Activated CD8-positive, alpha-beta T cell treated with anti-CD3 and anti-CD28 coated beads, Interleukin-2, amount 10 ng/mL, durations not matched to agents 7 days and 5 days (primary cell): ENCODE measurements at regions of chr2 and their contacts with region 1.

Region 1: GRCh38 chr2:25314514-25315315 is 27.0 kb downstream of the DNMT3A start:
- DNase-seq: peak; percentile 88
- ATAC-seq: peak; percentile 84
- H3K4me3 Mint-ChIP-seq: peak overlapping the region; percentile 81
- H3K27ac Mint-ChIP-seq: peak overlapping the region; percentile 97
- H3K4me1 Mint-ChIP-seq: peaks cover 54% of the 10 kb centered on the region
- H3K27me3 Mint-ChIP-seq: no peaks in the 10 kb centered on the region

Region 2: DNA sequence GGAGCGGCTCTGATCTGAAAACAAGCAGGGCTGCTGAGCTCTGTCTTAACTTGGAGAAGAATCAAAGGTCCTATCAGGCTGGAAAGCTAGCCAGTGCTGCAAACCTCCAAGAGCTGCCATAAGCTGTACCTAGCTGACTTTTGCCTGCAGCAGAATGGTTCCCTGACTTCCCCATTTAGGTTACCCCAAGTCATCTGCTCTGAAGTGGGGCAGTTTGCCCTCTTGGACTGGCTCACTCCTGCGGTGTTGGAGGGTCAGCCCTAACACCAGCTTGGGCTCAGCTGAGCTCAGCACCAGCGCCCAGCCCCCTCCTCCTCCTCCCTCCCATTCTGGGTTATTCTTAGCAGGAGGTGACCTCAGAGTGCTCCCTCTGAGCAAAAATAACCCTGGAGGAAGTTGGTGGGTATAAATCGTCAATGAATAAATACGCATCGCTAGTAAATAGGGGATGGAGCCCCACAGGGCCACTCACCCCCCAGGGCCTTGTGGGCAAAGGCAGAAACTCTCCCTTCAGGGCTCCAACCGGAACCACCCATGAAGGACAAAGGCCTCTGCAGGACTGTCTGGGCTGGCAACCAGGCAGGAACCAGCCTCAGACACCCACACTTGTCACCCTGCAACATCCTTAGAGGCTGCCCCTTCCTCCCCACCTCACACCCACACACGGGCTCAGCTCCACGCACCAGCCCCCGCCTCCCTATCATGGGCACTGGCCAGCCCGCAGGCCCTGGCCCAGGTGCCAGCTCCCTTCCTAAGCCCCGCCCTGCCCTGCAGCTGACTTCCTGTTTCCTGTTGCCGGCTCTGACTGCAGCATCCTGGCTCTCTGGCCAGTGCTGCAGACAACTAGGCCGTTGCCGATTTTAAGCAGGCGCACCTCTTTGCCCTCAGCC is 19.9 kb before region 1 on chr2:
- CTCF ChIA-PET with region 1: interaction called, 8 read pairs
- POLR2A ChIA-PET with region 1: interaction called, 17 read pairs
- DNase-seq: peak; percentile 92
- ATAC-seq: peak; percentile 92
- H3K4me3 Mint-ChIP-seq: peak overlapping the region; percentile 70
- H3K27ac Mint-ChIP-seq: peak overlapping the region; percentile 93
- H3K4me1 Mint-ChIP-seq: peaks cover 73% of the 10 kb centered on the region
- H3K27me3 Mint-ChIP-seq: no peaks in the 10 kb centered on the region

Region 3: GRCh38 chr2:25331686-25332365 is 17.1 kb after region 1 on chr2:
- CTCF ChIA-PET with region 1: interaction called, 14 read pairs
- POLR2A ChIA-PET with region 1: interaction called, 17 read pairs
- DNase-seq: no peak
- ATAC-seq: no peak
- H3K4me3 Mint-ChIP-seq: no peak overlapping the region
- H3K27ac Mint-ChIP-seq: no peak overlapping the region
- H3K4me1 Mint-ChIP-seq: peaks cover 51% of the 10 kb centered on the region
- H3K27me3 Mint-ChIP-seq: no peaks in the 10 kb centered on the region

Region 4: DNA sequence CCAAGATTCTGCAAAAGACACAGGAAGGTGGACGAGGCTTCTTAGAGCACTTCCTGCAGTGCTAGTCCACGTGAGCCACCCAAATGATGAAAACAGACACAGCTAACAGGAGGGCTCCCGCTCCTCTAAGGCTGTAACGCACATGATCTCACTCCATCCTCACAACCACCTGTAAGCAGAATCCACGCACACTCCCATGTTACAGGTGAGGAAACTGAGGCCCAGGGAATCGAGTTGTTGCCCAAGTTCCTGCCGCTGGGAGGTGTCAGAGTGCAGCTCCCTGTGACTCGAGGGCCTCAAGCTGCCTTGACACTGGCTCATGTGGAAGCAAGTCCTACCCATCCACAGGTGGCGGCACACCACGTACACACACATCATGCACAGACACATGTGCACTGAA is 22.6 kb after region 1 on chr2:
- CTCF ChIA-PET with region 1: interaction called, 14 read pairs
- POLR2A ChIA-PET with region 1: interaction called, 17 read pairs
- DNase-seq: peak; percentile 40
- ATAC-seq: no peak
- H3K4me3 Mint-ChIP-seq: peak overlapping the region; percentile 16
- H3K27ac Mint-ChIP-seq: peak overlapping the region; percentile 74
- H3K4me1 Mint-ChIP-seq: peaks cover 70% of the 10 kb centered on the region
- H3K27me3 Mint-ChIP-seq: no peaks in the 10 kb centered on the region

Region 5: GRCh38 chr2:25567406-25567805 is 252.7 kb after region 1 on chr2:
- CTCF ChIA-PET with region 1: interaction called, 11 read pairs
- POLR2A ChIA-PET with region 1: no interaction called
- DNase-seq: peak; percentile 52
- ATAC-seq: peak; percentile 74
- H3K4me3 Mint-ChIP-seq: no peak overlapping the region
- H3K27ac Mint-ChIP-seq: peak overlapping the region; percentile 73
- H3K4me1 Mint-ChIP-seq: peaks cover 19% of the 10 kb centered on the region
- H3K27me3 Mint-ChIP-seq: no peaks in the 10 kb centered on the region